ENCODE measurements at regions of chr1 and their contacts with region 1.

Region 1: GRCh38 chr1:149886396-149887195 is 12.8 kb upstream of the BOLA1 start:
- DNase-seq: peak; percentile 51 to 97 (median 93)
- ATAC-seq: peak; percentile 69 to 73
- H3K4me3 Mint-ChIP-seq: no peak overlapping the region
- H3K27ac Mint-ChIP-seq: no peak overlapping the region
- H3K4me1 Mint-ChIP-seq: peaks cover 9 to 16% (median 11%) of the 10 kb centered on the region in 4 donors
- H3K27me3 Mint-ChIP-seq: no peaks in the 10 kb centered on the region

Region 2: DNA sequence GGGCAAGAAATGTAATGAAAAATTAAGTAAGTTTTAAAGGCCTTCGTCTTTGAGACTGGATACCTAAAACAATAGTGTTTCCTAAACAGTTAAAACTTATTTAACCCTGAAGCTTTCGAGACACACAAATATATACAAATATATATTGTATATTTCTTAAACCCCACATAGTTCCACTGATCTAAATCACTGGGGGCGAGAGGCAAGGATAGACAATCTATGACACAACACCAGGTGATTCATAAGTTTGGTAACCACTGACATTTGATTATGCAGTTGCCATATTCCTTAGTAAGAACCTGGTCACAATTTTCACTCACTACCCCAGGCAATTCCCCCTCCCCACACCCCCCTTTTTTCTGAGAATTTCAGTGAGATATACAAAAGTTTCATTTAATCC is 42.5 kb before region 1 on chr1:
- POLR2A ChIA-PET with region 1: interaction called, 353 read pairs
- DNase-seq: peak in 2 of 10 donors; percentile 1 to 13
- ATAC-seq: no peak
- H3K4me3 Mint-ChIP-seq: peak overlapping the region; percentile 83 to 96 (median 92)
- H3K27ac Mint-ChIP-seq: peak overlapping the region; percentile 43 to 96 (median 86)
- H3K4me1 Mint-ChIP-seq: peaks cover 30 to 57% (median 45%) of the 10 kb centered on the region in 4 donors
- H3K27me3 Mint-ChIP-seq: no peaks in the 10 kb centered on the region

Region 3: DNA sequence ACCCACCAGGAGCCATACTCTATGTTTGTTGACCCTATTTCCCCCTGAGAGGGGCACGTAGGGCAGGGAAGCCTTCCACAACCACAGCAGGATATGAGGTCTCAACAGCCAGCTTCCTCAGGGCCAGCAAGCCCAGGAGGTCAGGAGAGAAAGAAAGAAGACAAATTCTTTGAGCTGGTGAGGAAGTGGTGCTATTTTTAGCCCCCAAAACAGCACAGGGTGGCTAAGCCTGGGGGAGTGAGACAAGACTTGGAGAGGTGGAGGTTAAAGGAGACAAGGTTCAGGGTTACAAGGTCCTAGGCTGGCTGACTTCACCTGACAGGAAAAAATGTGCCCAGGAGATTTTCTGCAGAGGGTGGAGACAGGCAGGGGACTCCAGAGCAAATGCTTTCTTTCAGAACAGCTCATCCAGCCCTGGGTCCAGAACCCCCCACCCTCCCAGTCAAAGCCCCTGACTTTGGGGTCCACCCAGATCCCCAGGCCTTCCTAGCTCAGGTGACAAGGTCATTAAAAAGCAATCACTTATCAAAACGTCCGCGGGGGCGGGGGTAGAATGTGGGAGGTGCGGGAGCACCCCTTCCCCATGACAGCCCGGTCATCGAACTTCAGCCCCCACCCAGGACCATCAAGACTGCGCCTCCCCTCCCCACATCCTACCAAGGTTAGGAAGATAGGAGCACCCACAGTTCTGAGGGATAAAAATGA is 29.7 kb after region 1 on chr1:
- POLR2A ChIA-PET with region 1: interaction called, 20 read pairs
- DNase-seq: no peak
- ATAC-seq: peak; percentile 21 to 45
- H3K4me3 Mint-ChIP-seq: peak overlapping the region; percentile 68 to 93 (median 90)
- H3K27ac Mint-ChIP-seq: peak overlapping the region; percentile 10 to 85 (median 72)
- H3K4me1 Mint-ChIP-seq: peaks cover 14 to 46% (median 42%) of the 10 kb centered on the region in 4 donors
- H3K27me3 Mint-ChIP-seq: peaks cover 0 to 4% (median 0%) of the 10 kb centered on the region in 5 donors

Region 4: DNA sequence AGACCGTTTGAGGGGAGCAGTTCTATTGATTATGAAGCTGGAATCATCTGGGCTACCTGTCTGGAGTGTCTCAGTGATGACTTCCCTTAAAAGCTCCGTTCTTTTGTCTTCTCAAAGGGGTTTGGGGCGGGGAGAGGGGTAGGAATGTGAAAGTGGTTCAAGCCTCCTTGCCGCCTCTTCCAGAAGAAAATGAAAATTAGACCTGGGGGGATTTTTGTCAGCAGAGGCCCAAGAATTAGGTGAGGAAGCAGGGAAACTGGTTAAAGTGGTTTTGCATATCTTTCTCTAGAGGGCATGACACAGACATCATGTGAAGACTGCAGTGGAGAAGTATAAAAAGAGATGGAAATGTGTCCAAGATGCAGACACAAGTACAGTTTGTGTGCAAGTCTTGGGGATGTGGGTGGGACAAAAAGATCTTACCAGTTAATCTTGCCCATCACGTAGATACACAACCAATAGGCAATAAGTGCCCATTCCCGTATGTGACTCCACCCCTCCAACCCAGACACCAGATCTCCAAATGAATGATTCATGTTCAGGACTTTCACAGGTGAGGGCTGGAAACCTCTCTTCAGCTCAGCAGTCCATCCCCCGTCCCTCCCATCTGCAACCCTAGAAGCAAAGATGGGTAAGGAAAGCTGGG is 50.6 kb after region 1 on chr1:
- POLR2A ChIA-PET with region 1: no interaction called
- DNase-seq: no peak
- ATAC-seq: no peak
- H3K4me3 Mint-ChIP-seq: no peak overlapping the region
- H3K27ac Mint-ChIP-seq: peak overlapping the region in 2 of 10 donors; percentile 15 to 31
- H3K4me1 Mint-ChIP-seq: peaks cover 0 to 21% (median 7%) of the 10 kb centered on the region in 4 donors
- H3K27me3 Mint-ChIP-seq: peaks cover 0 to 5% (median 2%) of the 10 kb centered on the region in 5 donors

Region 5: GRCh38 chr1:150010393-150011115 is 124.0 kb after region 1 on chr1 and contains the start of gene OTUD7B:
- POLR2A ChIA-PET with region 1: interaction called, 19 read pairs
- DNase-seq: peak; percentile 25 to 77 (median 54)
- ATAC-seq: peak; percentile 74 to 81
- H3K4me3 Mint-ChIP-seq: peak within 1 kb of the TSS; percentile 82 to 99 (median 94)
- H3K27ac Mint-ChIP-seq: peak within 1 kb of the TSS; percentile 84 to 96 (median 92)
- H3K4me1 Mint-ChIP-seq: peaks cover 11 to 38% (median 28%) of the 10 kb centered on the region in 4 donors
- H3K27me3 Mint-ChIP-seq: peaks cover 0 to 24% (median 0%) of the 10 kb centered on the region in 5 donors
- polyA plus RNA-seq, gene OTUD7B: 0.16 to 1.2 (median 0.37) TPM

Region 6: DNA sequence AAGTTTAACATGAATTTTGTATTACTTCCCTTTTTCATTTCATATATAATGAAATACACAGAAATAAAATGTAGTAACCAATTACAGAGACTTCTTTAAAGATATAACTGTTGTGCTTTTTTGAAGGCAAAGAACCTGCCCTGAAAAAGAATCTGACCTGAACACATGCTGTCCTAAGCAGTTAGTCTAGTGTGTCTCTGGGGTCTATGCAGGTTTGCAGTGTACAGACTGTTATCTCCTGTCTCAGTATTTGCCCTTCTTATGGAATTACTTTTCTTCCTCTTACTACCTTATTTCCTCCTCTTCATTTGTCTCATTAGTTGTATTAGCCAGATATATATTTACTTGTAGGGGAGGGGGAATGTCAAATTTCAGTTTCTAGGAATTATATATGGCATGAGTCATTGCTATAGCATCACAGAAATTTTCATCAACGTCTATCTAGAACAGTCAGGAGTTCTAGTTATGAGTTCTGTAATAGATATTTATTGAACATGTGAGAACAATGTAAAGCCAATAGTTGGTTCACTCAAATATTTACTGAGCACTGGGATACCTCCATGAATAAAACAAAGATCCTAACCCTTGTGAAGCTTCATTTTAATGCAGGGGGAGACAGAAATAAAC is 234.8 kb after region 1 on chr1:
- POLR2A ChIA-PET with region 1: no interaction called
- DNase-seq: no peak
- ATAC-seq: no peak
- H3K4me3 Mint-ChIP-seq: no peak overlapping the region
- H3K27ac Mint-ChIP-seq: peak overlapping the region in 1 of 10 donors; percentile 47
- H3K4me1 Mint-ChIP-seq: peaks cover 0 to 11% (median 1%) of the 10 kb centered on the region in 4 donors
- H3K27me3 Mint-ChIP-seq: no peaks in the 10 kb centered on the region

Region 7: GRCh38 chr1:150138044-150138443 is 251.4 kb after region 1 on chr1:
- POLR2A ChIA-PET with region 1: no interaction called
- DNase-seq: no peak
- ATAC-seq: no peak
- H3K4me3 Mint-ChIP-seq: no peak overlapping the region
- H3K27ac Mint-ChIP-seq: no peak overlapping the region
- H3K4me1 Mint-ChIP-seq: peaks cover 0 to 3% (median 1%) of the 10 kb centered on the region in 4 donors
- H3K27me3 Mint-ChIP-seq: no peaks in the 10 kb centered on the region

Region 8: GRCh38 chr1:150149271-150150132 is 262.9 kb after region 1 on chr1 and contains the start of gene PLEKHO1:
- POLR2A ChIA-PET with region 1: interaction called, 29 read pairs
- DNase-seq: peak; percentile 55 to 91 (median 69)
- ATAC-seq: peak; percentile 56 to 74
- H3K4me3 Mint-ChIP-seq: peak within 1 kb of the TSS; percentile 91 to 98 (median 94)
- H3K27ac Mint-ChIP-seq: peak within 1 kb of the TSS; percentile 92 to 99 (median 97)
- H3K4me1 Mint-ChIP-seq: peaks cover 46 to 73% (median 69%) of the 10 kb centered on the region in 4 donors
- H3K27me3 Mint-ChIP-seq: no peaks in the 10 kb centered on the region
- polyA plus RNA-seq, gene PLEKHO1: 19.4 to 30.8 (median 30.4) TPM

Region 9: GRCh38 chr1:150235852-150236613 is 349.4 kb after region 1 on chr1 and contains the start of gene ANP32E:
- POLR2A ChIA-PET with region 1: interaction called, 30 read pairs
- DNase-seq: peak; percentile 79 to 98 (median 95)
- ATAC-seq: peak; percentile 88
- H3K4me3 Mint-ChIP-seq: peak within 1 kb of the TSS in 6 of 10 donors; percentile 91 to 98 (median 98)
- H3K27ac Mint-ChIP-seq: peak within 1 kb of the TSS in 9 of 10 donors; percentile 70 to 99 (median 97)
- H3K4me1 Mint-ChIP-seq: peaks cover 11 to 21% (median 20%) of the 10 kb centered on the region in 4 donors
- H3K27me3 Mint-ChIP-seq: no peaks in the 10 kb centered on the region
- polyA plus RNA-seq, gene ANP32E: 47.5 to 51.0 (median 50.3) TPM

Measured in naive thymus-derived CD8-positive, alpha-beta T cell (primary cell).